ENCODE measurements at regions of chr12 and their contacts with region 1.

Region 1: GRCh38 chr12:108664338-108665258 is 30.9 kb upstream of the SELPLG start:
- DNase-seq: peak; percentile 89
- ATAC-seq: peak; percentile 96

Region 2: GRCh38 chr12:108305991-108306501 is 358.6 kb before region 1 on chr12:
- intact Hi-C with region 1: no loop called
- DNase-seq: no peak
- ATAC-seq: no peak

Region 3: GRCh38 chr12:108685469-108686260 is 21.1 kb after region 1 on chr12:
- intact Hi-C with region 1: no loop called
- DNase-seq: no peak
- ATAC-seq: no peak

Region 4: GRCh38 chr12:108803428-108804105 is 139.0 kb after region 1 on chr12:
- intact Hi-C with region 1: loop called (anchors 5 kb)
- DNase-seq: peak; percentile 86
- ATAC-seq: peak; percentile 73

Measured in sciatic nerve (tissue), 2 donors.